Activated CD4-positive, alpha-beta memory T cell treated with anti-CD3 and anti-CD28 coated beads for 36 hours (primary cell): ENCODE measurements at regions of chr22 and their contacts with region 1.

Region 1: GRCh38 chr22:40645579-40646197 is 9.2 kb upstream of the MRTFA start:
- DNase-seq: no peak
- H3K4me3 Mint-ChIP-seq: no peak overlapping the region
- H3K27ac Mint-ChIP-seq: no peak overlapping the region
- H3K4me1 Mint-ChIP-seq: peaks cover 4% of the 10 kb centered on the region
- H3K27me3 Mint-ChIP-seq: no peaks in the 10 kb centered on the region

Region 2: DNA sequence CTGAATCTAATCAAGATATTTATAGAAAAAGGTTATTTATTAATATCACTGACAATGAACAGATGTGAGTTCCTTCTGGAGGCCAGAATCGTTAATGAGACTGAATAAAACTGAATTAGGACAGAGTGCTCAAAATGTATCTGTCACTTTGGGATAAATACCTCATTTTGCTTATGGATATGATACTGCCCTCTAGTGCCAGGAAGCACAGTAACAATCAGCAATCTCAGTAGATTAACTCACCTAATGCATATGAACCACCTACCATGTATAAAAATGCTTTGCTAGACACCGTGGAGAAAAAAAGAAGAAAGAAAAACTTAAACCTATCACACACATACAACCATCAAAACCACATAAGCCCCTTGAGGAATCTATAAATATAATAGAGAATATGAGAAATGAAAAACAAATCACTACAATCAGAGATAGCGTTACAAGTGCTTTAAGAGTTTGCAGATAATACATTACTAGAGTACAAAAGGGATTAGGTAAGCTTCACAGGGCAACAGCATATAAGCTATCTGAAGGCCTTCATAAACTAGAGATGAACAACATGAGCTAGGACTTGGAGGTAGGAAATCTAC is 157.9 kb before region 1 on chr22:
- CTCF ChIA-PET with region 1: interaction called, 36 read pairs
- POLR2A ChIA-PET with region 1: no interaction called
- intact Hi-C with region 1: no loop called
- DNase-seq: no peak
- H3K4me3 Mint-ChIP-seq: no peak overlapping the region
- H3K27ac Mint-ChIP-seq: no peak overlapping the region
- H3K4me1 Mint-ChIP-seq: peaks cover 32% of the 10 kb centered on the region
- H3K27me3 Mint-ChIP-seq: no peaks in the 10 kb centered on the region

Region 3: GRCh38 chr22:40525249-40525884 is 120.3 kb before region 1 on chr22:
- CTCF ChIA-PET with region 1: interaction called, 218 read pairs
- POLR2A ChIA-PET with region 1: interaction called, 5 read pairs
- intact Hi-C with region 1: loop called (anchors 1 kb)
- DNase-seq: peak; percentile 82
- H3K4me3 Mint-ChIP-seq: no peak overlapping the region
- H3K27ac Mint-ChIP-seq: no peak overlapping the region
- H3K4me1 Mint-ChIP-seq: peaks cover 37% of the 10 kb centered on the region
- H3K27me3 Mint-ChIP-seq: no peaks in the 10 kb centered on the region

Region 4: GRCh38 chr22:40553014-40553579 is 92.6 kb before region 1 on chr22:
- CTCF ChIA-PET with region 1: no interaction called
- POLR2A ChIA-PET with region 1: no interaction called
- intact Hi-C with region 1: no loop called
- DNase-seq: no peak
- H3K4me3 Mint-ChIP-seq: no peak overlapping the region
- H3K27ac Mint-ChIP-seq: no peak overlapping the region
- H3K4me1 Mint-ChIP-seq: peaks cover 15% of the 10 kb centered on the region
- H3K27me3 Mint-ChIP-seq: no peaks in the 10 kb centered on the region

Region 5: DNA sequence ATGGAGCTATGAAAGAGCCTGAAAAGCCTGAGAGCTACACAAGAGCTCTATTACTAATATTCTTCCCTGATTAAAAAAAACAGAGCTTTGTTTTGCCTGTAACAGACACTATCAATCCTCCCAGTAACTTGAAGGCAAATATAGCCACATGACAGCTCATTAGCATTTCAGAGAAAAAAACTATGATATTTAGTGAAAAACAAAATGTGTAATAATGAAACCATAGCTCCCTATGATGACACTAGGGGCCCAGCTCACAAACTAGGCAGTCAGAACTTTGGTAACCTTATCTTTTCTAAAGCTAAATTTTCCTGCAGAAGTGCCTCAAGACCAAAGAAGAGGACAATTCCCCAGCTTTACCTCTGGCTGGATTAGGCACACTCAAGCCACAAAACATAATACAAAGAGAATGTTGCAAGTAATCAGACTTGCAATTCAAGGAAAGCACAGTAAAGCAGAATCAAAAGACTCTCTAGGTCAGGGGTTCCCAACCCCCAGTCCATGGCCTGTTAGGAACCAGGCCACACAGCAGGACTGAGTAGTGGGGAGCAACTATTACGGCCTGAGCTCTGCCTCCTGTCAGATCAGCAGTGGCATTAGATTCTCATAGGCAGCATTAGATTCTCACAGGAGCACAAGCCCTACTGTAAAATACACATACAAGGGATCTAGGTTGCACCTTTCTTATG is 62.5 kb before region 1 on chr22:
- CTCF ChIA-PET with region 1: interaction called, 10 read pairs
- POLR2A ChIA-PET with region 1: no interaction called
- intact Hi-C with region 1: no loop called
- DNase-seq: peak; percentile 25
- H3K4me3 Mint-ChIP-seq: no peak overlapping the region
- H3K27ac Mint-ChIP-seq: peak overlapping the region; percentile 36
- H3K4me1 Mint-ChIP-seq: peaks cover 31% of the 10 kb centered on the region
- H3K27me3 Mint-ChIP-seq: no peaks in the 10 kb centered on the region

Region 6: GRCh38 chr22:40898850-40899357 is 253.2 kb after region 1 on chr22:
- CTCF ChIA-PET with region 1: interaction called, 14 read pairs
- POLR2A ChIA-PET with region 1: no interaction called
- intact Hi-C with region 1: no loop called
- DNase-seq: peak; percentile 41
- H3K4me3 Mint-ChIP-seq: peak overlapping the region; percentile 20
- H3K27ac Mint-ChIP-seq: peak overlapping the region; percentile 88
- H3K4me1 Mint-ChIP-seq: peaks cover 14% of the 10 kb centered on the region
- H3K27me3 Mint-ChIP-seq: no peaks in the 10 kb centered on the region